ENCODE measurements at regions of chr1 and their contacts with region 1.

Region 1: GRCh38 chr1:27284425-27285273 is 37.3 kb upstream of the TMEM222 start:
- DNase-seq: peak; percentile 53
- H3K4me3 ChIP-seq: no peak overlapping the region
- H3K27ac ChIP-seq: no peak overlapping the region
- H3K27me3 ChIP-seq: no peaks in the 10 kb centered on the region
- CTCF ChIP-seq: peak; percentile 82

Region 2: GRCh38 chr1:27102707-27103491 is 181.8 kb before region 1 on chr1:
- CTCF ChIA-PET with region 1: interaction called, 112 read pairs
- POLR2A ChIA-PET with region 1: no interaction called
- DNase-seq: no peak
- H3K4me3 ChIP-seq: no peak overlapping the region
- H3K27ac ChIP-seq: no peak overlapping the region
- H3K27me3 ChIP-seq: no peaks in the 10 kb centered on the region
- CTCF ChIP-seq: peak; percentile 96

Region 3: GRCh38 chr1:27111626-27112573 is 172.7 kb before region 1 on chr1:
- CTCF ChIA-PET with region 1: interaction called, 13 read pairs
- POLR2A ChIA-PET with region 1: no interaction called
- DNase-seq: peak; percentile 99
- H3K4me3 ChIP-seq: no peak overlapping the region
- H3K27ac ChIP-seq: peak overlapping the region; percentile 90
- H3K27me3 ChIP-seq: no peaks in the 10 kb centered on the region
- CTCF ChIP-seq: peak; percentile 38

Region 4: DNA sequence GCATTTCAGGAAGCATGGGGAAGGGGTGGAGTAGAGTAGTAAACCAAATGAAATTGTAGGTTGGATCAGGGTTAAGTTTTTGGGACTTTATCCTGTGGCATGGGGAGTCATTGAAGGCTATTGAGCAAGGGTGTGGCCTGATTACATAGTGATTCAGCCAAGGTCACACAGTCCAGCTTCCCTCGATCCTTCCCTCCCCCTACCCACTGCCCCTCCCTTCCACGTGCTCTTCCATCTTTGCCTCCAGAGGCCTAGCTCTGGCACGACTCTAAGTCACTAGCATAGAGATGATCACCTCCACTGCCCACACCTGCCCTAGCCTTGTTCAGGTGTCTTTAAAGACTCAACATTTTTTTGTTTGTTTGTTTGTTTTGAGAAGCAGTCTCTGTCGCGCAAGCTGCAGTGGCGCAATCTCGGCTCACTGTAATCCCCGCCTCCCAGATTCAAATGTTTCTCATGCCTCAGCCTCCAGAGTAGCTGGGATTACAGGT is 92.6 kb before region 1 on chr1:
- CTCF ChIA-PET with region 1: interaction called, 23 read pairs
- POLR2A ChIA-PET with region 1: no interaction called
- DNase-seq: no peak
- H3K4me3 ChIP-seq: no peak overlapping the region
- H3K27ac ChIP-seq: no peak overlapping the region
- H3K27me3 ChIP-seq: no peaks in the 10 kb centered on the region
- CTCF ChIP-seq: no peak

Region 5: GRCh38 chr1:27671964-27672749 is 387.5 kb after region 1 on chr1 and contains the start of gene IFI6:
- CTCF ChIA-PET with region 1: interaction called, 13 read pairs
- POLR2A ChIA-PET with region 1: no interaction called
- DNase-seq: peak; percentile 92
- H3K4me3 ChIP-seq: peak within 1 kb of the TSS; percentile 70
- H3K27ac ChIP-seq: peak within 1 kb of the TSS; percentile 85
- H3K27me3 ChIP-seq: no peaks in the 10 kb centered on the region
- CTCF ChIP-seq: peak; percentile 51
- polyA plus RNA-seq, gene IFI6: 26.8 and 29.6 TPM in 2 replicates

Measured in AG04450 (cell line).